Naive thymus-derived CD4-positive, alpha-beta T cell (primary cell): ENCODE measurements at regions of chr2 and their contacts with region 1.

Region 1: DNA sequence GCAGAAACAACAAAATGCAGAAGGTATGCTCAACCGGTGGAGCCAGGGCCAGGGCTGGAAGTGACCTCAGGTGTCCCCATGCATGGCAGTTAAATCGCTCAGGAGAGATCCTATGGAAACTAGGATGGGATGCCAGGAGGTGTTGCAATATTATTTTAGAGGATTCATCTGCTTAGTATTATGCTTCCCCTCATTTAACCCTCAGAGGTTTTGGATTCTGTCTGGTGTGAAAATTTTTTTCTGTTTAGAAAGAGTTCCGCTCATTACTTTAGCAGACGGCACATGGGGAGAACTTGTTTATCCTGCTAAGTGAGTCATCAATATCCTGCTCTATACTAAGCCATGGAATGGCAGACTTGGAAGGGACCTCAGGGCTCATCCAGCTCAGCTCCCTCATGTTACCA is 42.5 kb downstream of the TRIB2 start:
- DNase-seq: no peak
- ATAC-seq: no peak
- H3K4me3 ChIP-seq: no peak overlapping the region
- H3K4me3 Mint-ChIP-seq: no peak overlapping the region
- H3K27ac ChIP-seq: no peak overlapping the region
- H3K27ac Mint-ChIP-seq: no peak overlapping the region
- H3K4me1 ChIP-seq: peaks cover 0 to 6% of the 10 kb centered on the region in 2 donors
- H3K4me1 Mint-ChIP-seq: peaks cover 2 to 13% (median 11%) of the 10 kb centered on the region in 7 donors
- H3K27me3 ChIP-seq: no peaks in the 10 kb centered on the region
- H3K27me3 Mint-ChIP-seq: peaks cover 0 to 35% (median 0%) of the 10 kb centered on the region in 5 donors

Region 2: DNA sequence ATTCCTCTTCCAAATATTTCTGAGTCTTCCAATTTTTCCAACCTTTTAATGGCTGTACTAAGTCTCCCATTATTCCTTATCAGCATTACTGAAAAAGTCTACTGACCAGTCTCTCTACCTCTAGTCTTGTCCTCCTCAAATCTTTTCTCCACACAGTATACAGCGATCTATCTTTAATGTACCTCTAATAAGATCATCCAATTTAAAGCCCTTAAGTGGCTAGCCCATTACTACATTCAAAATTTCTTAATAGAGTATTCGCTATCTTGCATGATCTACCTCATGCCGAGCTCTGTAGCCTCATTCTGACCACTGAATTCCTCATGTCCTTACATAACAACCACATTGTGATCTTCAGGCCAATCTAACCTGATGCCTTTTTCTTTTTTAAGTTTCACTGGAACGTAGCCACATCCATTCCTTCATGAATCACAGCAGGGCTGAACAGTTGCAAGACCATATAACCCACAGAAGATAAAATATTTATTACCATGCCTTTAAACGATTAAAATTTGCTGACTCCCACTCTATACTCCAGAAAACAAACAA is 1546.1 kb before region 1 on chr2:
- CTCF ChIA-PET with region 1: no interaction called
- POLR2A ChIA-PET with region 1: no interaction called
- intact Hi-C with region 1: no loop called
- DNase-seq: no peak
- ATAC-seq: no peak
- H3K4me3 ChIP-seq: no peak overlapping the region
- H3K4me3 Mint-ChIP-seq: no peak overlapping the region
- H3K27ac ChIP-seq: no peak overlapping the region
- H3K27ac Mint-ChIP-seq: peak overlapping the region in 2 of 9 donors; percentile 16 to 19
- H3K4me1 ChIP-seq: no peaks in the 10 kb centered on the region
- H3K4me1 Mint-ChIP-seq: peaks cover 0 to 3% (median 0%) of the 10 kb centered on the region in 7 donors
- H3K27me3 ChIP-seq: no peaks in the 10 kb centered on the region
- H3K27me3 Mint-ChIP-seq: no peaks in the 10 kb centered on the region

Region 3: DNA sequence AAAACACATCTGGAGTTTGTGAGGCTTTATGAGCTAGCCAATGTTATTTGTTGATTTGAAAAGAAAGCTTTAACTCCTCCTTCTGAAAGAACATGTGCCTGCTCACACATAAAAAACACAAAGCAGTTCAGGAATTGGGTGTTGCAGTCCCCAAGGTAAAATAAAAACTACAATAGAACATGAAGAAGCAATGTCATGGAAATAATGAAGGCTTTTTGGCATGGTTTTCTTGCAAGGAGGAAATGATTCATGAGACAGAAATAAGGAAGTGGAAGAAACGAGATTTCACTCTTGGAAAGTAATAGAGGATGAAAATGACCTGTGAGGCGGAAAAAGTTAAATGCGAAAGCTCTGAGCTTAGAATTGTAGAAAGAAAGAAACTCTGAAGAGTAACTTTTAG is 38.6 kb after region 1 on chr2:
- CTCF ChIA-PET with region 1: no interaction called
- POLR2A ChIA-PET with region 1: no interaction called
- intact Hi-C with region 1: loop called in 1 of 2 experiments (anchors 5 kb)
- DNase-seq: no peak
- ATAC-seq: no peak
- H3K4me3 ChIP-seq: no peak overlapping the region
- H3K4me3 Mint-ChIP-seq: no peak overlapping the region
- H3K27ac ChIP-seq: no peak overlapping the region
- H3K27ac Mint-ChIP-seq: no peak overlapping the region
- H3K4me1 ChIP-seq: no peaks in the 10 kb centered on the region
- H3K4me1 Mint-ChIP-seq: no peaks in the 10 kb centered on the region
- H3K27me3 ChIP-seq: no peaks in the 10 kb centered on the region
- H3K27me3 Mint-ChIP-seq: peaks cover 0 to 3% (median 0%) of the 10 kb centered on the region in 5 donors